ENCODE measurements at regions of chr7 and their contacts with region 1.

Region 1: DNA sequence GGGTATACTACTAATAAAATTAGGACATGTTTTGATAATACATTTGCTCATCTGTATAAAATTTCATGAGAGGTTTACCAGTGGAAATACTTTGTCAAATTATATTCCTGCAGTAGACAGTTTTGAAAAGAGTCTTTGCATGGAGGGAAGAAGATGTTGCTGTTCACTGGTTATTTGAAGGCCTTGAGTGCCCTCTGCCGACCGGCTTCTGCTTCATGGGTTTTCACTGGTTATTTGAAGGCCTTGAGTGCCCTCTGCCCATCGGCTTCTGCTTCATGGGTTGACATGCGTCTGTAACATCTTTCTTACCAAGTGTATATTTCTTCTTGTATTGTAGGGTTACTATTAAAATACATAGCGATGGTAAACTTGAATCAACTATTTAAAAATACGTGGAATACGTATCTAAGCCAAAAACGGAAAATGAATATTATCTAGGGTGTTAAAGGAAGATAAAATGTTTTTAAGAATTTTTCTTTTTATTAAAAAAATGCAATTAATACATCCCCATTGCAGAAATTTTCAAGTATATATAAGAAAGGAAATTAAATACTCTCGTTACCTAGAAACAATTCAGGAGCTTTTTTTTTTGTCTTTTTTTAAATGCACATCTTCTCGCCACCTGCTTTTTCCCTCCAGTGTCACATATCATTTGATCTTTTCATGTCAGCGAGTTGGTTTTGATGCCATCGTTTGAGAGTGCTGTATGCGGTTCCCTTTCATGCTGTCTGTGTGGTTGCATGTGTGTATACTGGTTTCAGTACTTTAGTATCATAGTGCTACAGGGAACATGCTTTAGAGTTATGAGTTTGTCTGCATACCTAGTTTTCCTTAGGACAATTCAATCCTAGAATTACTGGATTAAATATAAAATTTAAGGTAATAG is 73.4 kb downstream of the SHH start:
- DNase-seq: peak; percentile 56
- ATAC-seq: peak; percentile 92
- H3K4me3 ChIP-seq: no peak overlapping the region
- H3K27ac ChIP-seq: no peak overlapping the region
- H3K4me1 ChIP-seq: peaks cover 38% of the 10 kb centered on the region
- H3K27me3 ChIP-seq: no peaks in the 10 kb centered on the region
- CTCF ChIP-seq: peak; percentile 64 to 89 (median 66); a peak in 5 of 6 replicates
- EP300 ChIP-seq: no peak
- POLR2A ChIP-seq: no peak
- RAD21 ChIP-seq: peak; percentile 82

Region 2: DNA sequence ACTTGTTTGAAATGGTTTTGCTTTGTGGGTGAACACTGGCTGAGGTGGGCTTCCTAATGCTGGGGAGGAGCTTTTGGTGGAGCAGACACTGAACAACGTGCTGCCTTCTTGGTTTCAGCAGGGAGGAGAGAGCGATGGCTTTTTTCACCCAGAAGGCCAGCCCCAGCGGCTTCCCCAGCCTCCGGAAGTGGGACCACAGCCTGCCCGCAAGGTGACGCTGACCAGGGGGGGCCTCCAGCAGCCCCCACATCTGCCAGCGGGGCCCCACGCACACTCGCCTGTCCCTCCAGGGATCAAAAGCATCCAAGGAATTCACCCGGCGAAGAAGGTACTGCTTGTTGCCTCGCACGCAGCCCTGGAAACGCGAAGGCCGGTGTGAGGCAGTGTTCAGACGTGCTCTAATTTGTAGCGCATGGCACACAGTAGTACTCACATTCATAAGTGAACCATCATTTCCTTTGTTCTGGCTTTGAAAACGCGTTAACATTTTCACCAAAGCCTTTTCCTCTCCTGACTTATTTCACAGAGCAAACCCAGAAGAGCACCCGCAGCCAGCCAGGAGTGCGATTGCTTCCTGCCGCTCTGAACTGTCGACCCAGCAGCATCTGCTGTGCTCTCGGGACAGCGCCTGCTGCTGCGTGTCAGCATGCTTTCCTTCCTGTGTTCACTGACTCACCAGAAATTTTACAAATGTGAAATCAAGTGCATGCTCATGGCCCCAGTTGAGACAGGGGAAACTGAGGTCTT is 25.0 kb after region 1 on chr7:
- CTCF ChIA-PET with region 1: interaction called, 6 read pairs
- POLR2A ChIA-PET with region 1: no interaction called
- RAD21 ChIA-PET with region 1: no interaction called
- SMC1A ChIA-PET with region 1: interaction called, 6 read pairs
- in situ Hi-C with region 1: no loop called
- intact Hi-C with region 1: loop called (anchors 1 kb)
- DNase-seq: no peak
- ATAC-seq: peak; percentile 73
- H3K4me3 ChIP-seq: no peak overlapping the region
- H3K27ac ChIP-seq: peak overlapping the region; percentile 77
- H3K4me1 ChIP-seq: peaks cover 28% of the 10 kb centered on the region
- H3K27me3 ChIP-seq: no peaks in the 10 kb centered on the region
- CTCF ChIP-seq: no peak
- EP300 ChIP-seq: no peak
- POLR2A ChIP-seq: peak; percentile 47; the same call in 1 of the 2 replicates
- RAD21 ChIP-seq: no peak